Caco-2 (cell line): ENCODE measurements at regions of chr9 and their contacts with region 1.

Region 1: GRCh38 chr9:106862825-106863720 is at the start of gene ZNF462:
- DNase-seq: peak; percentile 63 to 72
- H3K4me3 ChIP-seq: peak within 1 kb of the TSS; percentile 79
- H3K4me3 Mint-ChIP-seq: peak within 1 kb of the TSS; percentile 89
- H3K27ac Mint-ChIP-seq: peak within 1 kb of the TSS; percentile 64
- H3K4me1 ChIP-seq: 0 out of 2 replicates have a peak, but pooled peaks cover 6% of the 10 kb centered on the region
- H3K4me1 Mint-ChIP-seq: no peaks in the 10 kb centered on the region
- H3K27me3 ChIP-seq: no peaks in the 10 kb centered on the region
- H3K27me3 Mint-ChIP-seq: no peaks in the 10 kb centered on the region
- CTCF ChIP-seq: peak in 1 of 2 experiments; percentile 34
- total RNA-seq, gene ZNF462: 34.5 and 36.8 TPM in 2 replicates

Region 2: DNA sequence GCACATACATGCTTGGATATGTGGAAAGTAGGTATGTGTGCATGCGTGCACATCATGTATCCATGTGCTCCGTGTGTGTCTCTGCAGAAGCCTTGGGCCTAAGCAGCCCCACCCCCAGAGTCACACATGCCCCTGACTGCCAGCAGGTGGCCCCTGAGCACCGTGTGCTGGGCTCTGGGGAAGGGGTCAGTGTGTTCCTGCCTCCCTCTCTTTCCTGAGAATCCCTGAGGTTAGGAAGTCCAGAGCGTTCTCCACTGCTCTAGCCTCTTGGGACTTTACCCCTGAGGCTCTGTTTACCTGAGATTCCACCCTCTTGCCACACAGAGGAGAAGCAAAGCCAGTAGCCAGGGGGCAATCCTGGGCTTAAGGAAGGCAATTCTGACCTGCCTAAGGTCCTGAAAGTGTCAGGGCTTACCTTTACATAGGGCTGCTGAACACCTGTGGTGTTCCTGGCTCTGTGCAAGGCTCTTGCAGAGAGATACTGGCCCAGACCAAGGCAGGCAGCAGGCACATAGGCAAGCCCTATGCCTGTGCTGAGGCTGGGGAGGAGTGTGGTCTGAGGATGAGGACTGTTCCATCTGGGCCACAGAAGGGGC is 961.5 kb before region 1 on chr9:
- CTCF ChIA-PET with region 1: no interaction called
- POLR2A ChIA-PET with region 1: no interaction called
- intact Hi-C with region 1: loop called (anchors 5 kb)
- DNase-seq: peak; percentile 66 to 84
- H3K4me3 ChIP-seq: no peak overlapping the region
- H3K4me3 Mint-ChIP-seq: no peak overlapping the region
- H3K27ac Mint-ChIP-seq: no peak overlapping the region
- H3K4me1 ChIP-seq: peaks cover 4% of the 10 kb centered on the region
- H3K4me1 Mint-ChIP-seq: no peaks in the 10 kb centered on the region
- H3K27me3 ChIP-seq: no peaks in the 10 kb centered on the region
- H3K27me3 Mint-ChIP-seq: peaks cover 5% of the 10 kb centered on the region
- CTCF ChIP-seq: peak; percentile 70 to 74

Region 3: GRCh38 chr9:106693558-106693957 is 169.5 kb before region 1 on chr9:
- CTCF ChIA-PET with region 1: no interaction called
- POLR2A ChIA-PET with region 1: no interaction called
- intact Hi-C with region 1: loop called (anchors 5 kb)
- DNase-seq: peak; percentile 55 to 60
- H3K4me3 ChIP-seq: no peak overlapping the region
- H3K4me3 Mint-ChIP-seq: no peak overlapping the region
- H3K27ac Mint-ChIP-seq: peak overlapping the region; percentile 91
- H3K4me1 ChIP-seq: peaks cover 13% of the 10 kb centered on the region
- H3K4me1 Mint-ChIP-seq: peaks cover 20% of the 10 kb centered on the region
- H3K27me3 ChIP-seq: no peaks in the 10 kb centered on the region
- H3K27me3 Mint-ChIP-seq: no peaks in the 10 kb centered on the region
- CTCF ChIP-seq: no peak

Region 4: GRCh38 chr9:106761493-106761892 is 101.6 kb before region 1 on chr9:
- CTCF ChIA-PET with region 1: no interaction called
- POLR2A ChIA-PET with region 1: no interaction called
- intact Hi-C with region 1: no loop called
- DNase-seq: peak in 1 of 2 experiments; percentile 25
- H3K4me3 ChIP-seq: no peak overlapping the region
- H3K4me3 Mint-ChIP-seq: no peak overlapping the region
- H3K27ac Mint-ChIP-seq: peak overlapping the region; percentile 36
- H3K4me1 ChIP-seq: peaks cover 17% of the 10 kb centered on the region; the same call in 1 of the 2 replicates
- H3K4me1 Mint-ChIP-seq: peaks cover 15% of the 10 kb centered on the region
- H3K27me3 ChIP-seq: no peaks in the 10 kb centered on the region
- H3K27me3 Mint-ChIP-seq: no peaks in the 10 kb centered on the region
- CTCF ChIP-seq: no peak

Region 5: DNA sequence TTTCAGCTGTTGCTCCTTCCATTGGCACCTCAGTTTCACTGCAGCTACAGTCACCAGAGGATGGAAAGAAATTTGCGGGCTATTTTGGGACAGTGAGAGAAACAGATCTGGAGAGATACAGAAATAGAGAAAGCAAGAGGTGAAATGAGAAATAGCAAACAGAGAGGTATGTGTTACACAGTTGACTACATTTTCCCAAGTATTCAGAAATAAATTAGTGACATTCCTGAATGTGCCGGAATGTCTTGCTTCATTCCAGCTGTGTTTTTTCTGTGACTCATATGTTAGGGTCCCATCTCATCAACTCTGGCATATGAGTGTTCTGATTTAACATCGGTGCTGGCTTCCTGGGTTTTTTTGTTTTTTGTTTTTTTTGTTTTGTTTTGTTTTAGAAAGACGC is 63.9 kb before region 1 on chr9:
- CTCF ChIA-PET with region 1: no interaction called
- POLR2A ChIA-PET with region 1: interaction called, 10 read pairs
- intact Hi-C with region 1: loop called (anchors 2 kb)
- DNase-seq: peak in 1 of 2 experiments; percentile 29
- H3K4me3 ChIP-seq: no peak overlapping the region
- H3K4me3 Mint-ChIP-seq: peak overlapping the region; percentile 32
- H3K27ac Mint-ChIP-seq: peak overlapping the region; percentile 27
- H3K4me1 ChIP-seq: peaks cover 22% of the 10 kb centered on the region
- H3K4me1 Mint-ChIP-seq: peaks cover 24% of the 10 kb centered on the region
- H3K27me3 ChIP-seq: no peaks in the 10 kb centered on the region
- H3K27me3 Mint-ChIP-seq: no peaks in the 10 kb centered on the region
- CTCF ChIP-seq: no peak

Region 6: GRCh38 chr9:106921341-106921899 is 58.3 kb after region 1 on chr9:
- CTCF ChIA-PET with region 1: interaction called, 4 read pairs
- POLR2A ChIA-PET with region 1: interaction called, 5 read pairs
- intact Hi-C with region 1: loop called (anchors 1 kb)
- DNase-seq: peak; percentile 87 to 93
- H3K4me3 ChIP-seq: peak overlapping the region; percentile 22
- H3K4me3 Mint-ChIP-seq: peak overlapping the region; percentile 85
- H3K27ac Mint-ChIP-seq: peak overlapping the region; percentile 100
- H3K4me1 ChIP-seq: peaks cover 66% of the 10 kb centered on the region
- H3K4me1 Mint-ChIP-seq: peaks cover 47% of the 10 kb centered on the region
- H3K27me3 ChIP-seq: no peaks in the 10 kb centered on the region
- H3K27me3 Mint-ChIP-seq: no peaks in the 10 kb centered on the region
- CTCF ChIP-seq: no peak

Region 7: DNA sequence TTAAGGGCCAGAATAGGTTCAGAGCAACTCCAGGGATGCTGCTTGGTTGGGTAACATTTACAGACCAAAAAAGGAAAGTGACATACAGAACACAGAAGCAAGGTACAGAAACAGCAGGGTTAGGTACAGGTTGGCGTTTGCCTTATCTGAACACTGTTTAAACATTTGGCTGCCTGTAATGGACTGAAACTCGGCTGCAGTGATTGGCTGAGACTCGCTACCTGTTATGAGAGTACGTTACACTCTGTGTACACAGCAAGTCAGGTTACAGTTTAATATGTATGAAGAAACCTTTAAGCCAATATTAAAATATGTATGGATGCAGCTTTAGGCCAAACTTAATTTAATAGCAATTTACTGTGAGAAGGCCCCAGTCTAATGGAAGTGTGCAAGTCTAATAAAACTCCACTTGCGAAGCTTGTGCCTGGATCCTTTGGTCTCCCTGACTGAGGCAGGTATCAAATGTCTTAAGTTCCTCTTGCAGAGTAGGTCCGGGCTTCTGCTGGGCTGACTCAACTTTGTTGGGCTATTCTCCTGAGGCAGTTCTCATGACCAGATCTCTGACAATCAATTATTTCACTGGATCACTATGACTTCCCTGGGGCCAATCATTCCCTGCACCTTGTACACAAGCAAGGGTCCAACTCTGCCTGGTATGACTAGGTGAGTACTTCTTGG is 204.8 kb after region 1 on chr9:
- CTCF ChIA-PET with region 1: no interaction called
- POLR2A ChIA-PET with region 1: no interaction called
- intact Hi-C with region 1: loop called (anchors 5 kb)
- DNase-seq: peak; percentile 63 to 76
- H3K4me3 ChIP-seq: no peak overlapping the region
- H3K4me3 Mint-ChIP-seq: peak overlapping the region; percentile 41
- H3K27ac Mint-ChIP-seq: peak overlapping the region; percentile 21
- H3K4me1 ChIP-seq: peaks cover 31% of the 10 kb centered on the region
- H3K4me1 Mint-ChIP-seq: peaks cover 25% of the 10 kb centered on the region
- H3K27me3 ChIP-seq: no peaks in the 10 kb centered on the region
- H3K27me3 Mint-ChIP-seq: no peaks in the 10 kb centered on the region
- CTCF ChIP-seq: no peak

Region 8: GRCh38 chr9:107172160-107172978 is 309.3 kb after region 1 on chr9:
- CTCF ChIA-PET with region 1: no interaction called
- POLR2A ChIA-PET with region 1: no interaction called
- intact Hi-C with region 1: loop called (anchors 10 kb)
- DNase-seq: peak; percentile 72 to 80
- H3K4me3 ChIP-seq: no peak overlapping the region
- H3K4me3 Mint-ChIP-seq: no peak overlapping the region
- H3K27ac Mint-ChIP-seq: no peak overlapping the region
- H3K4me1 ChIP-seq: peaks cover 6% of the 10 kb centered on the region; the same call in 1 of the 2 replicates
- H3K4me1 Mint-ChIP-seq: no peaks in the 10 kb centered on the region
- H3K27me3 ChIP-seq: no peaks in the 10 kb centered on the region
- H3K27me3 Mint-ChIP-seq: no peaks in the 10 kb centered on the region
- CTCF ChIP-seq: peak; percentile 82 to 87